ENCODE measurements at regions of chr2 and their contacts with region 1.

Region 1: DNA sequence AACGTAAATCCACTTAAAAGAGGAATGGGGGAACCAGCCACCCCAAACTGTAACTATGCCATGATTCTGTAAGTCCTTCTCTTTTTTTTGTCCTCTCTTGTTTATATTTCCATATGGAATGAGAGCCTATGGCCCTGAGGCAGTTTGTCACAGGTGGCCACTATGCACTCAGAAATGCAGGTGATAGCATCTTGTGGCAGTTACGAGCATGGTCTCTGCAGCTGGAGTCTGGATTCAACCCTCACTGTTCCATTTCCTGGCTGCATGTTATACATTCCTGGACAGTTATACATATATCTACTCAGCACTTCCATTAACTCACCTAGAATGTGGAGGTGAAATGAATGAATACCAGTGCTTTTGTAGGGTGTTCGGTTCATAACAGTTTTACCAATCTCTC is 291.5 kb upstream of the FANCL start:
- DNase-seq: no peak
- ATAC-seq: no peak
- H3K4me3 Mint-ChIP-seq: no peak overlapping the region
- H3K27ac Mint-ChIP-seq: no peak overlapping the region
- H3K4me1 Mint-ChIP-seq: no peaks in the 10 kb centered on the region
- H3K27me3 Mint-ChIP-seq: peaks cover 12% of the 10 kb centered on the region
- CTCF ChIP-seq: no peak

Region 2: GRCh38 chr2:58319481-58319880 is 213.2 kb before region 1 on chr2:
- CTCF ChIA-PET with region 1: no interaction called
- POLR2A ChIA-PET with region 1: no interaction called
- intact Hi-C with region 1: no loop called
- DNase-seq: no peak
- ATAC-seq: no peak
- H3K4me3 Mint-ChIP-seq: no peak overlapping the region
- H3K27ac Mint-ChIP-seq: no peak overlapping the region
- H3K4me1 Mint-ChIP-seq: no peaks in the 10 kb centered on the region
- H3K27me3 Mint-ChIP-seq: no peaks in the 10 kb centered on the region
- CTCF ChIP-seq: no peak

Region 3: DNA sequence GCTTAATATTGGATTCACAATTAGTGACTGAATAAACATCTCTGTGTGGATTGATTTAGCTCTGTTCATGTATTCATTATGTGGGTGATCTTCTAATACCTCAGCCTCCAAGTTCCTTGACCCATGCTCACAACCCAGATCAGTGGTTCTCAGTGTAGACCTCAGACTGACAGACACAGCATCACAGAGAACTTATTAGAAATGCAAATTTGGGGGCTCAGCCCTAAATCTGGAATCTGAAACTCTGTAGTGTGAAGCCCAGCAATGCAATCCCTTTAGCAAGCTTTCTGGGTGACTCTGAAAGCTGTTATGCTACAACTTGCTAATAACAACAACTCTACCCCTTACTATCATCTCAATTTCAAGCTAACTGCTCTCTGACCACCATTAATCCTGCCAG is 18.4 kb before region 1 on chr2:
- CTCF ChIA-PET with region 1: no interaction called
- POLR2A ChIA-PET with region 1: no interaction called
- intact Hi-C with region 1: no loop called
- DNase-seq: no peak
- ATAC-seq: no peak
- H3K4me3 Mint-ChIP-seq: no peak overlapping the region
- H3K27ac Mint-ChIP-seq: no peak overlapping the region
- H3K4me1 Mint-ChIP-seq: no peaks in the 10 kb centered on the region
- H3K27me3 Mint-ChIP-seq: peaks cover 2% of the 10 kb centered on the region
- CTCF ChIP-seq: no peak

Region 4: GRCh38 chr2:58553937-58554336 is 21.3 kb after region 1 on chr2:
- CTCF ChIA-PET with region 1: no interaction called
- POLR2A ChIA-PET with region 1: no interaction called
- intact Hi-C with region 1: no loop called
- DNase-seq: no peak
- ATAC-seq: no peak
- H3K4me3 Mint-ChIP-seq: no peak overlapping the region
- H3K27ac Mint-ChIP-seq: no peak overlapping the region
- H3K4me1 Mint-ChIP-seq: no peaks in the 10 kb centered on the region
- H3K27me3 Mint-ChIP-seq: peaks cover 2% of the 10 kb centered on the region
- CTCF ChIP-seq: no peak

Region 5: DNA sequence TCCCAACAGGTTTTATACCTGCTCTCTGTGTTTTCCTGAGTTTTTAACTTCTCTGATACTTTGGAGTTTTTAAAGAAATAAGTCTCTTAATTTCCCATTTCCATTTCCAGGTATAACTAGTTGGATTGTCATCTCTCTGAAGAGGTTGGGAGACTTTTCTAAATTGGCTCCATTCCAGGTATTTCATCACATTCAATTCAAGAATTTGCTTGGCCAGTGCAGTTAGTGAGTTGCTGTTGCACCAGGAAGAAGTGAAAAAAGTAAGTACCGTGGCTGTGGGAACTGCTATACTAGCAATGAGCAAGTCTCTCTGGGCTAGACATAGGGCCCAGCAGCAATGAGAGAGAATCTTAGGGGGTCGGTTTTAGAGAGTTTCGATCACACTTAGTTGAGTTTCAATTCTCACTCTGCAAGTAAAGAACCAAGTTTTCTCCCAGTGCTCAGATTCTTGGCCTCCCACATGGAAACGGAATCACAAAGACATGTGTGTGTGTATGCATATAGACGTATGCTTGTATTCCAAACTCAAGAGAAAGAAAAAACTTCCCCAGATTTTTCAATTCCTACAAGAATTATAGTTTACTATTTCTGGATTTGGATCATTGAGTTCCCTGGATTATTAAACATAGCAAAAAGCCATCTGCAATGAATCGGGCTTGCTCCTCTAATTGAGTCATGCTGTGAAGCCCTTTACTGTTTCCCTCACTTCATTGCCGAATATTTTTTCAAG is 1126.4 kb after region 1 on chr2:
- CTCF ChIA-PET with region 1: no interaction called
- POLR2A ChIA-PET with region 1: no interaction called
- intact Hi-C with region 1: loop called (anchors 5 kb)
- DNase-seq: no peak
- ATAC-seq: no peak
- H3K4me3 Mint-ChIP-seq: no peak overlapping the region
- H3K27ac Mint-ChIP-seq: no peak overlapping the region
- H3K4me1 Mint-ChIP-seq: no peaks in the 10 kb centered on the region
- H3K27me3 Mint-ChIP-seq: no peaks in the 10 kb centered on the region
- CTCF ChIP-seq: no peak